ENCODE measurements at regions of chr2 and their contacts with region 1.

Region 1: GRCh38 chr2:26606847-26607190 is 34.3 kb downstream of the CIB4 start:
- DNase-seq: no peak
- H3K4me3 ChIP-seq: no peak overlapping the region
- H3K27ac ChIP-seq: peak overlapping the region in 3 of 4 donors; percentile 40 to 60 (median 48)
- H3K4me1 ChIP-seq: peaks cover 6 to 28% (median 9%) of the 10 kb centered on the region in 3 donors
- H3K27me3 ChIP-seq: peaks cover 0 to 20% (median 0%) of the 10 kb centered on the region in 4 donors
- CTCF ChIP-seq: no peak
- POLR2A ChIP-seq: no peak

Region 2: GRCh38 chr2:26742048-26742770 is 135.4 kb after region 1 on chr2:
- intact Hi-C with region 1: loop called (anchors 2 kb)
- DNase-seq: no peak
- H3K4me3 ChIP-seq: no peak overlapping the region
- H3K27ac ChIP-seq: no peak overlapping the region
- H3K4me1 ChIP-seq: peaks cover 0 to 8% (median 0%) of the 10 kb centered on the region in 3 donors
- H3K27me3 ChIP-seq: no peaks in the 10 kb centered on the region
- CTCF ChIP-seq: no peak
- POLR2A ChIP-seq: no peak

Measured in esophagus squamous epithelium (tissue), 5 donors.